Mammary epithelial cell (primary cell): ENCODE measurements at regions of chr1 and their contacts with region 1.

Region 1: GRCh38 chr1:11355559-11356475 is 82.8 kb downstream of the UBIAD1 start:
- DNase-seq: no peak
- H3K4me3 ChIP-seq: no peak overlapping the region
- H3K27ac ChIP-seq: no peak overlapping the region
- H3K4me1 ChIP-seq: no peaks in the 10 kb centered on the region
- H3K27me3 ChIP-seq: no peaks in the 10 kb centered on the region
- CTCF ChIP-seq: no peak

Region 2: DNA sequence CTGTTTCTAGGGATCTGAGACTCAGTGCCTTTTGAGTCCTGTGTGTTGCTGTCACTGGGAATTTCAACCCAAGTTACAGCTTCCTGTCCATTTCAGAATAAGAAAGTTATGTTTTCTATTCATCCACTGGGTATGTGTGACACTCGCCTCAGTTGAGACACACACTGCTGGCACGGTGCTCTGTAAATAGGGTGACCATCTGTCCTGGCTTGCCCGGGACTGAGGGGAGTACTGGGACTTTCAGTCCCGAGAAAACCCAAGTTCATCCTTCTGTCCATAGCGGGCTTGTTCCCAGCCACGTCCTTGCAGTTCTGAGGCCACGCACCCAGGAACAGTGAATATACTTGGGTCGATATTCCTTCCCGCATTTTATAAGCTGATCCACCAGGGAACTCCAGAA is 66.9 kb after region 1 on chr1:
- CTCF ChIA-PET with region 1: no interaction called
- dilution Hi-C with region 1: loop called (anchors 5 kb)
- in situ Hi-C with region 1: no loop called
- intact Hi-C with region 1: no loop called
- DNase-seq: no peak
- H3K4me3 ChIP-seq: no peak overlapping the region
- H3K27ac ChIP-seq: no peak overlapping the region
- H3K4me1 ChIP-seq: no peaks in the 10 kb centered on the region
- H3K27me3 ChIP-seq: peaks cover 1% of the 10 kb centered on the region
- CTCF ChIP-seq: no peak